ENCODE measurements at regions of chr10 and their contacts with region 1.

Region 1: DNA sequence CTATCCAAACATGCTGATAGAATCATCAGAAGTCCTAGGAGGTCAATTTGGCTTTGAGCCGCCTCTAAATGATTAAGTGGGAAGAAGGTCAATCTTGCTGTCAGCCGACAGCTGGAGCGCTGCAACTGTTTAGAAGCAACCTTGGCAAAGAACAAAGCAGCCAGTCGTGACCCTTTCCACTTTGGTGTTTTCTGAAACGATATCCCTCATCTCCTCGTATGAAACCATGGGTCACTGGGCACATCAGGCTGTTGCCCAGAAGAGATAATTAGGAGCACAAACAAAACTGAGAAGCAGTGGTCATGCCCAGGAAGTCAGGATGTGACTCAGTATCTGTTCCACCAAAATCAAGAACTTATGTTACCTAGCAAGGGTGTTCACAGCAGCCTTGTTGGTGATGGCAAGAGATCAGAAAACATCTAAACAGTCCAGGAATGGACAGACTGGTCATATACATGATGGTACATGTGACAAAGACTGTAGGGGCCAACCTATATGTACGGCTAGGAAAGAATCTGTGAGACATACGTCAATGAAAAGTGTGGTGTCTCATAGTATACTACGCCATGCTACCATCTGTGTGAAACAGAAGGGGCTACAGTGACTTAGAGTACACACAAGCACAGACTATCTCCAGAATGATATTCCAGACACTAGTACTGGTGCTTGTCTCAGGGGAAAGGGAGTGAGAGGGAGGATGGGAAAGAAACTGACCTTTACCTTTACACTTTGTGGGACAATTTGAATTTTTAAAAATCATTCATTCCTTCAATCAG is 22.4 kb downstream of the STN1 start:
- DNase-seq: peak in 1 of 5 donors; percentile 51
- ATAC-seq: peak in 3 of 4 donors; percentile 26 to 45 (median 42)
- H3K4me3 ChIP-seq: no peak overlapping the region
- H3K27ac ChIP-seq: peak overlapping the region; percentile 43 to 90 (median 76)
- H3K4me1 ChIP-seq: peaks cover 14 to 57% (median 40%) of the 10 kb centered on the region in 12 donors
- H3K27me3 ChIP-seq: no peaks in the 10 kb centered on the region
- CTCF ChIP-seq: no peak
- POLR2A ChIP-seq: no peak

Region 2: GRCh38 chr10:103911021-103911459 is 15.4 kb after region 1 on chr10:
- intact Hi-C with region 1: loop called in 1 of 10 experiments (anchors 2 kb)
- DNase-seq: no peak
- ATAC-seq: no peak
- H3K4me3 ChIP-seq: no peak overlapping the region
- H3K27ac ChIP-seq: peak overlapping the region in 4 of 12 donors; percentile 6 to 86 (median 18)
- H3K4me1 ChIP-seq: peaks cover 11 to 85% (median 26%) of the 10 kb centered on the region in 12 donors
- H3K27me3 ChIP-seq: no peaks in the 10 kb centered on the region
- CTCF ChIP-seq: no peak
- POLR2A ChIP-seq: no peak

Region 3: DNA sequence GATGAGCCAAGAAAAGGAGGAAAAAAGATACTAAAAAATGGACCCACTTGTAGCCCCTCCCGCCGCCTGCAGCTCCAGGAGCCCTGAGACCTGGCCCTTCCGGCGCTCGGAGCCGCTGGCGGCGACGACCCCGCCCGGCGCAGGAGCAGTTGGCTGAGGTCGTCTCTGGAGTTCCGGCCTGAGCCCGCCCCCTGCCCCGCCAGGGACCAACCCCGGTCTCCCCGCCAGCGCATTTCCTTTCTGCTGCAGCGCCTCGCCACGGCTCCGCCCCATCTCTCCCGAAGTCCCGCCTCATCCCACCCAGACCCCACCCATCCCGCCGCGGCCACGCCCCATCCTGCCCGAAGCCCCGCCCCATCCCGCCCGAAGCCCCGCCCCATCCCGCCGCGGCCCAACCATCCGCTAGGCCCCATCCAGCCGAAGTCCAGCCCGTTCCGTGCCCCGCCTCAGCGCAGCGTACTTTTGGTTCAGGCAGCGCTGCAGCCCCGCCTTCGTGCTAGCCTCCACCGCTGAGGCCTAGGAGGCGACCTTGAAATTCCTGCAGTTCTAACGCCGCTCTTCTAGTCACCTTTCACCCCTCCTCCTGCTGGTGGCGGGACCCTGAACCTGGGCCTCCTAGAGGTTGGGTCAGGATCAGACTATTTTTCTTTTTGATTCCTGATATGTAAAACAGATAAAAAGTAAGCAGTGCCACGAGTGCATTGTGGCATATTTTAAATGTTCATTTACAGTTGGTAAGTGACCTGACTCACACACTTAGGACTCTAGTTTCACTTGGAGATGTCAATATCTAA is 22.7 kb after region 1 on chr10 and contains the start of gene STN1:
- intact Hi-C with region 1: loop called in 1 of 10 experiments (anchors 1 kb)
- DNase-seq: peak; percentile 98 to 99 (median 99)
- ATAC-seq: peak; percentile 98
- H3K4me3 ChIP-seq: peak within 1 kb of the TSS; percentile 27 to 97 (median 74)
- H3K27ac ChIP-seq: peak within 1 kb of the TSS; percentile 90 to 100 (median 96)
- H3K4me1 ChIP-seq: peaks cover 0 to 44% (median 29%) of the 10 kb centered on the region in 12 donors
- H3K27me3 ChIP-seq: no peaks in the 10 kb centered on the region
- CTCF ChIP-seq: peak in 4 of 12 donors; percentile 11 to 19 (median 14)
- POLR2A ChIP-seq: peak; percentile 85 to 97
- total RNA-seq, gene STN1: 28.6 to 53.1 (median 32.7) TPM

Region 4: GRCh38 chr10:103954543-103954942 is 58.9 kb after region 1 on chr10:
- intact Hi-C with region 1: no loop called
- DNase-seq: no peak
- ATAC-seq: no peak
- H3K4me3 ChIP-seq: no peak overlapping the region
- H3K27ac ChIP-seq: no peak overlapping the region
- H3K4me1 ChIP-seq: no peaks in the 10 kb centered on the region
- H3K27me3 ChIP-seq: no peaks in the 10 kb centered on the region
- CTCF ChIP-seq: no peak
- POLR2A ChIP-seq: no peak

Region 5: DNA sequence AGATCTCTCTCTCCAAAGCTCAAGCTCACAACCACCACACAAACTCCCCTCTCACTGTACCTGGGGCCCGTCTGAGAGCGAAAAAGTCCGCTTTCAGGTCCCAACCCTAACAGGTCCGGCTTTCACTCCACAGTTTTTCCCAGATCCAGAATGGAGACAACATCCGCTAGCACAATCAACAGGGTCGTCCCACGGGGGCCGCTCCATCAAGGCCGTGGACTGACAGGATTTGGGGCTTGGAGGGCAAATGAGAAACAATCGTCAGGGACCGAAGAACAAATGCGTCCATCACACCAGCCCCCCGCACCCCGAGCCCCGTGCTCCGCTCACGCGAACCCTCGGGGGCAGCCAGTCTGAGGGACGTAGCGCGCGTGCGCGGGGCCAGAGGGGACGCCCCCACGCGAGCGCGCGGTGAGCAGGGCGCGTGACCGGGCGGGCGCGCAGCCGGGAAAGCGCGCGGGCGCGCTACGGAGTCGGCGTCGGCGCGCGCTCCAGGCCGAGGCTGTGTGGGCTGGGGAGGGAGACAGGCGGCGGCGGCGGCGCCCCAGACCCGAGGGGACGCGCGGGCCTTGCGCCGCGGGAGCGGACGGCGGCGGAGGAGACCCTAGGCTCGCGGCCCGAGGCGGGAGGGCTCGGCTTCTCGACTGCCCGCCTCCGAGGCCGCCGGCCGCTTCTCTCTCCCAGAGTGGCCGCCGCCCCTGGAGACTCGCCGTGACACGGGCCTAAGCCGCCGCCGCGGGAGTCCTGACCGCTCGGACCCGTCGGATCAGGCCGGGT is 71.3 kb after region 1 on chr10 and contains the start of gene SLK:
- intact Hi-C with region 1: loop called in 4 of 10 experiments (anchors 2 to 5 kb)
- DNase-seq: peak; percentile 87 to 93 (median 89)
- ATAC-seq: peak; percentile 81 to 98 (median 96)
- H3K4me3 ChIP-seq: peak within 1 kb of the TSS; percentile 83 to 99 (median 92)
- H3K27ac ChIP-seq: peak within 1 kb of the TSS; percentile 94 to 99 (median 96)
- H3K4me1 ChIP-seq: peaks cover 0 to 43% (median 33%) of the 10 kb centered on the region in 12 donors
- H3K27me3 ChIP-seq: no peaks in the 10 kb centered on the region
- CTCF ChIP-seq: no peak
- POLR2A ChIP-seq: peak; percentile 65 to 94
- total RNA-seq, gene SLK: 33.0 to 57.8 (median 47.9) TPM

Region 6: DNA sequence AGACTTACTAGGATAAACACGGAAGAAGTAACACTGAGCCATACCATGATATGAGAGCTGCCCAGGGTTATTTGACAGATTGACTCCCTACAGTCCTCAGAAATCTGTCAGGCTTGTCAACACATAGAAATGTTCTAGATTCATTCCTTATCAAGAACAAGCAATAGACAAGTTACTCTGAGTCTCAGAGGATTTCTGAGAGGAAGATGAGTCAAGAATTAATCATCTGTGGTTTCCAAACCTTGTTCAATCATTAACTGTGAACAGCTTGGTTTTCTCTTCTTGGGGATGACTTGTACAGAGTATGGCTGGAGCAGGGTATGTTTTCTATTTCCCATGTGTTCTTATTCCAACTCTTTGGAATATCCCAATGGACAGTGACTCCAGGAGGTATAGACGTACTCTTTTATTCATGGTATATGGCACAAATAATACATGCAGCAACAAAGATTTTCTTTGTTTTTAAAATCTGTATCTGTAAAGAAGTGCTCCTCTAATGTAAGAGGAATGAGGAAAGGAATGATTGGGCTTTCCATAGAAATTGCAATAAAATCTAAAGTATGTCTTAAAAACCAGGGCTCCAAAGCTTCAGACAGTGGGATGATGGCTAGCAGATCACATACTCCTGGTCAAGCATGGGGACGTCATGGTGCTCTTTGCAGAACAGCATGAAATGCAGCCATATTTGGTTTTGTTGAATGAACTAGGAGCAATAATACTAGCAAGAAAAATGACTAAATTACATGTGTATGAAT is 214.5 kb after region 1 on chr10:
- intact Hi-C with region 1: loop called in 1 of 10 experiments (anchors 10 kb)
- DNase-seq: no peak
- ATAC-seq: no peak
- H3K4me3 ChIP-seq: no peak overlapping the region
- H3K27ac ChIP-seq: no peak overlapping the region
- H3K4me1 ChIP-seq: no peaks in the 10 kb centered on the region
- H3K27me3 ChIP-seq: no peaks in the 10 kb centered on the region
- CTCF ChIP-seq: no peak
- POLR2A ChIP-seq: no peak

Region 7: DNA sequence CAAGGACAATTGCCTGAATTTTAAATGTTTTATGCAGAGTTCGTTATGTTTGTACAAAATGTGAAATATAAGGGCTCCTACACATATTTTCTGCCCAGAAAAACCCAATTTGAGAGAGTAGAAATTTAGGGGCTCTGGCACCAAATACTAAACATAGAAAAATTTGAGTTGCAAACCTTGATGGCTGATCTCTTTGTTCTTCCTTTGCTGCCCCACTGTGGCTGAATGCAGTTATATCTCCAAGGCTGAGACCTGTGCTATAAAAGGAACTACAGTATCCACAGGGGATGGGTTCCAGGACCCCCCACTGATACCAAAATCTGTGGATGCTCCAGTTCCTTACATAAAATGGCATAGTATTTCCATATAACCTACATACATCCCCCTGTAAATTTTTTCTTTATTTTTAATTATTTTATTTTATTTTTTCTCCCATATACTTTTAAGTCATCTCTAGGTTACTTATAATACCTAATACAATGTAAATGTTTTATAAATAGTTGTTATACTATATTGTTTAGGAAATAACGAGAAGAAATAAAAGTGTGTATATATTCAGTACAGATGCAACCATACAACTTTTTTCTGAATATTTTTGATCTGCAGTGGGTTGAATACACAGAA is 314.1 kb after region 1 on chr10:
- intact Hi-C with region 1: loop called in 1 of 10 experiments (anchors 10 kb)
- DNase-seq: peak in 2 of 5 donors; percentile 20 to 33
- ATAC-seq: peak in 3 of 4 donors; percentile 49 to 71 (median 68)
- H3K4me3 ChIP-seq: no peak overlapping the region
- H3K27ac ChIP-seq: no peak overlapping the region
- H3K4me1 ChIP-seq: peaks cover 0 to 4% (median 0%) of the 10 kb centered on the region in 12 donors
- H3K27me3 ChIP-seq: no peaks in the 10 kb centered on the region
- CTCF ChIP-seq: peak; percentile 30 to 70 (median 52)
- POLR2A ChIP-seq: no peak

Measured in heart left ventricle (tissue), 16 donors.